ENCODE measurements at regions of chr4 and their contacts with region 1.

Region 1: GRCh38 chr4:2418650-2419571 is at the start of gene CFAP99:
- DNase-seq: peak; percentile 89 to 97 (median 93)
- ATAC-seq: peak; percentile 95
- H3K4me3 ChIP-seq: peak within 1 kb of the TSS; percentile 70
- H3K4me3 Mint-ChIP-seq: peak within 1 kb of the TSS; percentile 85 to 98 (median 92)
- H3K27ac ChIP-seq: peak within 1 kb of the TSS; percentile 73
- H3K27ac Mint-ChIP-seq: peak within 1 kb of the TSS; percentile 81 to 98 (median 90)
- H3K4me1 ChIP-seq: peaks cover 24 to 28% of the 10 kb centered on the region in 2 donors
- H3K4me1 Mint-ChIP-seq: peaks cover 33 to 46% (median 40%) of the 10 kb centered on the region in 7 donors
- H3K27me3 ChIP-seq: no peaks in the 10 kb centered on the region
- H3K27me3 Mint-ChIP-seq: peaks cover 8 to 67% (median 13%) of the 10 kb centered on the region in 5 donors
- total RNA-seq, gene CFAP99: 0.12 to 0.27 TPM in 2 of 5 experiments, not detected in the others

Region 2: GRCh38 chr4:1233641-1234308 is 1185.1 kb before region 1 on chr4:
- CTCF ChIA-PET with region 1: no interaction called
- POLR2A ChIA-PET with region 1: no interaction called
- intact Hi-C with region 1: no loop called
- DNase-seq: no peak
- ATAC-seq: peak; percentile 8
- H3K4me3 ChIP-seq: no peak overlapping the region
- H3K4me3 Mint-ChIP-seq: no peak overlapping the region
- H3K27ac ChIP-seq: no peak overlapping the region
- H3K27ac Mint-ChIP-seq: peak overlapping the region in 1 of 9 donors; percentile 65
- H3K4me1 ChIP-seq: no peaks in the 10 kb centered on the region
- H3K4me1 Mint-ChIP-seq: peaks cover 0 to 8% (median 6%) of the 10 kb centered on the region in 7 donors
- H3K27me3 ChIP-seq: no peaks in the 10 kb centered on the region
- H3K27me3 Mint-ChIP-seq: no peaks in the 10 kb centered on the region

Region 3: GRCh38 chr4:1870578-1871443 is 548.1 kb before region 1 on chr4 and contains the start of gene NSD2:
- CTCF ChIA-PET with region 1: no interaction called
- POLR2A ChIA-PET with region 1: no interaction called
- intact Hi-C with region 1: loop called in 1 of 2 experiments (anchors 5 kb)
- DNase-seq: peak; percentile 79 to 95 (median 86)
- ATAC-seq: peak; percentile 86
- H3K4me3 ChIP-seq: peak within 1 kb of the TSS; percentile 86
- H3K4me3 Mint-ChIP-seq: peak within 1 kb of the TSS; percentile 84 to 98 (median 89)
- H3K27ac ChIP-seq: peak within 1 kb of the TSS; percentile 99
- H3K27ac Mint-ChIP-seq: peak within 1 kb of the TSS; percentile 91 to 96 (median 95)
- H3K4me1 ChIP-seq: peaks cover 15 to 20% of the 10 kb centered on the region in 2 donors
- H3K4me1 Mint-ChIP-seq: peaks cover 12 to 37% (median 34%) of the 10 kb centered on the region in 7 donors
- H3K27me3 ChIP-seq: no peaks in the 10 kb centered on the region
- H3K27me3 Mint-ChIP-seq: peaks cover 0 to 4% (median 0%) of the 10 kb centered on the region in 5 donors
- total RNA-seq, gene NSD2: 35.4 to 207 (median 38.5) TPM

Region 4: DNA sequence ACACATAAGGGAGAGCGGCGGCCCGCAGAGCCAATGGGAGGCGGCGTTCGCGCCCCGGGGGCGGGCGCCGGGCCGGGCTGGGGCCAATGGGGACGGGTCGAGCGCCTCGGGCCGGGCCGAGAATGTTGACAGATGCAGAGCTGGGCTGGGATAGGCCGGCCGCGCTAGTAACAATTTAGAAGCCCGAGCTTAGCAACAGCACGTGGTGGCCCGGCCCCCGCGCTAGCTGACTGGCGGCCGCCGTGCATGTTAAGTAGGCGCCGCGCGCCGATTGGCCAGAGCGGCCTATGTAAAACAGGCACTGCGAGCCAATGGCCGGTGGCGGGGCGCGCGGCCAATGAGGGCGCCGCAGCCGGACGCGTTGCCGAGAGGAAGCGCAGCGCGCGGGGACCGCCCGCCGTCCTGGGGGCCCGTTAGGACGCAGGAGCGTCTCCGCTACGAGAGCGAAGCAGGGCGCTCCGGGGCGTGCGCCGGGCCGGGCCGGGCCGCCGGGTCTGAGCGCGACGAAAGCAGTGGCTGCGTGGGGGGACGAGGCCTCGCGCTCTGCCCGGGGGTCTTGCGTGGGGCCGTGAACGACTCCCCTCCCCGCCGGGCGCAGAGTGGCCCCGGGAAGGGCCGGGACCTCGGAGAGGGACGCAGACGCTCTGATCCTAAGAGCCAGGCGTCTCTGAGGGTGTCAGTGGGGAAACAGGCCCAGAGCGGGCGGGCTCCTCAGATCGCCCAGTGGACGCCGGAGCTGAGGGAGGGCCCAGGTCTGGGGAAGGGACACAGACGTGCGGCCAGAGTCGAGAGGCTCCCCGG is 156.6 kb before region 1 on chr4:
- CTCF ChIA-PET with region 1: interaction called, 5 read pairs
- POLR2A ChIA-PET with region 1: interaction called, 14 read pairs
- intact Hi-C with region 1: loop called (anchors 1 kb)
- DNase-seq: peak; percentile 95 to 99 (median 98)
- ATAC-seq: peak; percentile 93
- H3K4me3 ChIP-seq: peak overlapping the region; percentile 69
- H3K4me3 Mint-ChIP-seq: peak overlapping the region; percentile 61 to 85 (median 76)
- H3K27ac ChIP-seq: peak overlapping the region; percentile 95
- H3K27ac Mint-ChIP-seq: peak overlapping the region; percentile 61 to 87 (median 83)
- H3K4me1 ChIP-seq: peaks cover 8 to 23% of the 10 kb centered on the region in 2 donors
- H3K4me1 Mint-ChIP-seq: peaks cover 0 to 11% (median 0%) of the 10 kb centered on the region in 7 donors
- H3K27me3 ChIP-seq: no peaks in the 10 kb centered on the region
- H3K27me3 Mint-ChIP-seq: no peaks in the 10 kb centered on the region

Region 5: DNA sequence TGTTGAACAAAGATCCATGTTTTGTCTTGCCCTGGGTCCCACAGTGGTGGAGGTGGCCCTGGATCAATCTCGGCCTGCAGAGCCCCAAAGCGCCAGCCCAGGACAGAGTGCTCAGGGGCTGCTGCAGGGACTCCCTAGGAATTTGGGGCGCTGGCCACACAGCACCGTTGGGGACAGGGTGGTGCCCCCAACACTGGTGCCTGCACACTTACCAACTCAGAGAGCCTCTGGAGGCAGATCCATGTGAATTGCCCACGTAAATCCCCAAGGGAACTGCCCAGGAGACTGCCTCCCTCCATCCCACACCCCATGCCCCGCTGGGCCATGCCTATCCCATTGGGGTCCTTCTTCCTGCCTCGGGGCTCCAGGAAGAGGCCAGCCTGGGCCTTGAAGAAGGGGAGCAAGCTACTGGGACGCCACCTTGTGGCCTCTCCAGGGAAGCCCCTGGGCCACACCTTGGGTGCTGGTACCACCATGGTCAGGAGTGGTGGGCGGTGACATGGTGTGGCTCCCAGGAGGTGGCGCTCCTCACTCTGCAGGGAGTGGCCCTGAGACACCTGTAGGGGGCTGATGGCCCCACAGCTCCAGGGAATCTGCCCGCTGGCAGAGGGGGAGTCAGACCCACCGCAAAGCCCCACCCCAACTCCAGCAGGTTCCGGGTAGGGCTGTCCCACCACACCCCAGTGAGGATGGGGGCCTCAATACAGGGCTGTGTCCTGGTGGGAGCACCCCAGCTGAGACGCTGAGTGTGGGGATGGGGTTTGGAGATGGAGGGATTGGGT is 22.7 kb after region 1 on chr4:
- CTCF ChIA-PET with region 1: no interaction called
- POLR2A ChIA-PET with region 1: no interaction called
- intact Hi-C with region 1: loop called (anchors 2 kb)
- DNase-seq: peak; percentile 41 to 69 (median 57)
- ATAC-seq: peak; percentile 96
- H3K4me3 ChIP-seq: no peak overlapping the region
- H3K4me3 Mint-ChIP-seq: no peak overlapping the region
- H3K27ac ChIP-seq: no peak overlapping the region
- H3K27ac Mint-ChIP-seq: peak overlapping the region in 2 of 9 donors; percentile 4 to 20
- H3K4me1 ChIP-seq: peaks cover 0 to 4% of the 10 kb centered on the region in 2 donors
- H3K4me1 Mint-ChIP-seq: peaks cover 0 to 5% (median 3%) of the 10 kb centered on the region in 7 donors
- H3K27me3 ChIP-seq: no peaks in the 10 kb centered on the region
- H3K27me3 Mint-ChIP-seq: no peaks in the 10 kb centered on the region

Region 6: GRCh38 chr4:2647403-2648158 is 228.7 kb after region 1 on chr4:
- CTCF ChIA-PET with region 1: no interaction called
- POLR2A ChIA-PET with region 1: no interaction called
- intact Hi-C with region 1: no loop called
- DNase-seq: no peak
- ATAC-seq: no peak
- H3K4me3 ChIP-seq: no peak overlapping the region
- H3K4me3 Mint-ChIP-seq: no peak overlapping the region
- H3K27ac ChIP-seq: no peak overlapping the region
- H3K27ac Mint-ChIP-seq: no peak overlapping the region
- H3K4me1 ChIP-seq: peaks cover 0 to 10% of the 10 kb centered on the region in 2 donors
- H3K4me1 Mint-ChIP-seq: peaks cover 16 to 22% (median 19%) of the 10 kb centered on the region in 7 donors
- H3K27me3 ChIP-seq: no peaks in the 10 kb centered on the region
- H3K27me3 Mint-ChIP-seq: no peaks in the 10 kb centered on the region

Region 7: DNA sequence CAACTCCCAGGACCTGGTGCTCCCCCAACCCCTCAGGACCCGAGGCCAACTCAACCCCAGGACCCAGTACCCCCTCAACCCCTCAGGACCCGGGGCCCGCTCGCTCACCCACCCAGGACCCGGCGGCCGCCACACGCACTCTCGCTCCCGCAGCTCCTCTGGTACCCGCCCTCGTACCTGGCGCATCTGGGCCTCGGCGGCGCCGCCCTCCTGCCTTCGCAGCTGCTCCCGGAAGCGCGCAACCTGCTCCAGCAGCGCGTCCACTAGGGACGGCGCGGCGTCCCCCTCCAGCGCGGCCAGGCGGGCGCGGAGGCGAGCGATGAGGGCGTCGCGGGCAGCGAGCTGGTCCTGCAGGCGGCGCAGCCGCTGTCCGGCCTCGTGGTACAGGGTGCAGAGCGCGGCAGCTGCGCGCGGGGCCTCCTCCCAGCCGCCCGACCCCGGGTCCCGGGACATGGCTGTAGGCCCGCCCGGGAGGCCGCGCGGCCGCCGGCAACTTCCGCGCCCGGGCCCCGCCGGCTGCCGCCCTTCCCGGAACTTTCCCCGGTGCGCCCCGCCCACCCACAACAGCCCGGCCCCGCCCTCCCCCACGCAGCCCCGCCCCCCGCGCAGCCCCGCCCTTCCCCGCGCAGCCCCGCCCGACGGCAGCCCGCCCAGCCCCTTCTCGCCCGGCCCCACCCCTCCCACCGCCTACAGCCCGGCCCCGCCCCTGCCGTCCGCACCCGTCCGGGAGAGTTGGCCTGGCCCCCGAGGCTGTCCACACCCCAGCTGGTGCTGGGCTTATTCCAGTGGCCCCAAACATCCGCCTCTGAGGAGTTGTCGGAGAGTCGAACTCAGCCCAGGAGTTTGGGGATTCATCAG is 337.2 kb after region 1 on chr4 and contains the start of gene TNIP2:
- CTCF ChIA-PET with region 1: no interaction called
- POLR2A ChIA-PET with region 1: no interaction called
- intact Hi-C with region 1: loop called in 1 of 2 experiments (anchors 2 kb)
- DNase-seq: peak; percentile 65 to 85 (median 74)
- ATAC-seq: peak; percentile 90
- H3K4me3 ChIP-seq: peak within 1 kb of the TSS; percentile 64
- H3K4me3 Mint-ChIP-seq: peak within 1 kb of the TSS; percentile 75 to 93 (median 87)
- H3K27ac ChIP-seq: peak within 1 kb of the TSS; percentile 91
- H3K27ac Mint-ChIP-seq: peak within 1 kb of the TSS; percentile 54 to 94 (median 86)
- H3K4me1 ChIP-seq: peaks cover 9 to 12% of the 10 kb centered on the region in 2 donors
- H3K4me1 Mint-ChIP-seq: peaks cover 22 to 29% (median 26%) of the 10 kb centered on the region in 7 donors
- H3K27me3 ChIP-seq: no peaks in the 10 kb centered on the region
- H3K27me3 Mint-ChIP-seq: no peaks in the 10 kb centered on the region
- total RNA-seq, gene TNIP2: 39.4 to 56.0 (median 43.6) TPM